ENCODE measurements at regions of chr5 and their contacts with region 1.

Region 1: DNA sequence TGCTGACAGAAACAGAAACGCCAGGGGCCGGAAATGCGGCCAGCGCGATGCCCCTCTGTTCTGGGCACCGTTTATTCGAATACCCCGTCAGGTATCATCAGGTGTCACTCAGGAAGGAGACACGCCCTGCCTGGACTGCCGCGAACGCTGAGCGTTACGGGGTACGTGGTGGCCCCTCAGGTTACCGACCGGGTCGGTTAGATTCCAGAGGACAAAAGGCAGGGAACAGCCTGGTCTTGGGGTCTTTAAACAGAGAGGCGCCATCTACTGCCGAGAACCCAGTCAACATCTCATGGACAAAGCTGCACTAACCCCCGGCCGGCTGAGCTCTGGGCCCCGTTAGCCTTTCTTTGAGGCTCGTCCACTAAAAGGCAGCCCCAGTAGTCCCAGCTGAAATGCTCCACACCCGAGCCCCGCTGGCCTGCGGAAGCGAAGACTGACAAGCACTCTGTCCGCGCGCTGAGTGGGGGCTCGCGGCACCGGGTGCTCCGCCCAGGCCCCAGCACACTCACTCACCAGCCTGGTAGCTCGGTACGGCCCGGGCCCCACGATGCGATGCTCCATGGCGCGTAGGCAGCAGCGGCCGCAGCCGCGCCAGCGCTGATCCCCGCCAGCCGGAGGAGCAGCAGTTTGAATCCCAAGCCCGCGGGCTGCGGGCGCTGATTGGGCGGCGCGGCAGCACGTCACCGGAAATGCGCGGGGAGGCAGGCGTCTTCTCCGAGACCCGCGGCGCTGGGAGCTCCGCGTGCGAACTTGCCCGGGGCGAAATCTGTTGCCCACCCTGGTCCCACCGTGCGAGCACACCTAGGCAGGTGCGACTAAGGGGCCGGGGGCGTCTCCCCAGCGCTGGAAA is at the start of gene DEPDC1B:
- ATAC-seq: peak; percentile 95 to 97 (median 96)
- H3K4me3 ChIP-seq: peak within 1 kb of the TSS; percentile 58 to 97 (median 78)
- H3K27ac ChIP-seq: peak within 1 kb of the TSS; percentile 38 to 70
- H3K4me1 ChIP-seq: peaks cover 9 to 11% of the 10 kb centered on the region in 2 donors
- total RNA-seq, gene DEPDC1B: 0.71 to 24.9 (median 2.8) TPM

Region 2: GRCh38 chr5:60883229-60883628 is 183.5 kb after region 1 on chr5:
- in situ Hi-C with region 1: loop called in 1 of 9 experiments (anchors 25 kb)
- ATAC-seq: peak in 2 of 8 experiments; percentile 27 to 55
- H3K4me3 ChIP-seq: no peak overlapping the region
- H3K27ac ChIP-seq: no peak overlapping the region
- H3K4me1 ChIP-seq: no peaks in the 10 kb centered on the region

Region 3: DNA sequence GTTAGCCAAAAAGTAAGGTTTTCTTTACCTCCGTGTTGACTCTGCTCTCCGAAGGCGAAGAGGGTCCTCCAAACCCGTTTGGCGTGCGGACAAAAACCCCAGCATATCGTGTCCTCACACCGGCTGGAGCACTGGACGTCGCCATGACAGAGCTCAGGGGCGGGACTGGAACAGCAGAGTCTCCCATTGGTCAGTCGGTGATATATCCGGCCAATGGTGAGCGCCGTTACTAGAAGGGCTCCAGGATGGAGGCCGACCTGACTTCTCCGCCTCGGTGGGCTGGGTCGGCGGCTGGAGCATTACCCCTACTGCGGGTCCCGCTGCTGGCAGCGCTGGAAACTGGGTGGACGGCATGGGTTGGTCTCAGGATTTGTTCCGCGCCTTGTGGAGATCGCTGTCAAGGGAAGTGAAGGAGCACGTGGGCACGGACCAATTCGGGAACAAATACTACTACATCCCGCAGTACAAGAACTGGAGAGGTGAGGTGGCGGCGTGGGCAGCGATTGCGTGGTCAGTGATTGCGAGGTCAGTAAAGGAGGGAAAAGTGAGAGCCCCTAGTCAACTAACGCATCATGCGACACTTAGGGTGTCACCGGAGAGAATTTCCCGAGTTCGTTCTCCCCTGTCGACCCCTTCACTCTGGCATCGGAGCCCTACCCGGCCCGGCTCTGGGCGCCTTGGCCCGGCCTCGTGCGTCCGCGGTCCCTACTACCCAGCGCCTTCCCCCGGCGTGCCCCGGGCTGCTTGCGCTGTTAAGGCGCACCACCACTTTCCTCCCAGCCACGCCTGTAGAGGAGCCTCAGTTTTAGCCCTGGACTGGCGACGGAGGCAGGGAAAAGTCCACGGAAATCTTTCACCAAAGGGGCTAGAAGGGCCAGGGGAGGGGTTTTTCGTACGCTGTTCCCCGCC is 245.4 kb after region 1 on chr5 and contains the starts of genes ERCC8 and NDUFAF2:
- in situ Hi-C with region 1: loop called in 1 of 9 experiments (anchors 25 kb)
- ATAC-seq: peak; percentile 91 to 99 (median 98)
- H3K4me3 ChIP-seq: peak within 1 kb of the TSS; percentile 57 to 98 (median 69)
- H3K27ac ChIP-seq: peak within 1 kb of the TSS; percentile 45 to 88
- H3K4me1 ChIP-seq: peaks cover 7 to 10% of the 10 kb centered on the region in 2 donors
- total RNA-seq, gene ERCC8: 11.2 to 21.8 (median 16.1) TPM
- total RNA-seq, gene NDUFAF2: 50.5 to 78.2 (median 64.4) TPM

Region 4: DNA sequence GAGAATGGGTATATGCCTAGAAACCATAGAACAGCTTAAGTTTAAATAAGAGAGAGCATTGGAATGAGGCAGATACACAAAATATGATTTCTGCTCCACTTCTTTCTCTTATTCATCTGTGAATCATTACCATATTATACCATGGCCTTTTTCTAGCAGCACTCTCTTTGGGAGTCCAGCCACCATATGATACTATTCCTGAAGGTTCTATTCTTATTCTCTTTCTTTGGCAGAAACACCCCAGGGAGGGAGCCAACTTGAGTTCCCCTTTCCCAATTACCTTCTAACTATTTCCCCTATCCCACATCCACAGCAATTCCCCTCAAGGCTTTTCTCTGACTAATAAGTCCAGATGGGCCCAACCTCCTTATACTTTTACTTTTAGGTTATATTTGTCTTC is 301.1 kb after region 1 on chr5:
- in situ Hi-C with region 1: no loop called
- ATAC-seq: no peak
- H3K4me3 ChIP-seq: no peak overlapping the region
- H3K27ac ChIP-seq: no peak overlapping the region
- H3K4me1 ChIP-seq: no peaks in the 10 kb centered on the region